ENCODE measurements at regions of chr6 and their contacts with region 1.

Region 1: GRCh38 chr6:169723200-169723909 is 945 bp downstream of the PHF10 start:
- DNase-seq: peak; percentile 47 to 85 (median 66)
- ATAC-seq: peak; percentile 30
- H3K4me3 ChIP-seq: peak overlapping the region; percentile 68 to 79
- H3K4me3 Mint-ChIP-seq: peak overlapping the region; percentile 85
- H3K27ac ChIP-seq: peak overlapping the region; percentile 72 to 84
- H3K27ac Mint-ChIP-seq: peak overlapping the region; percentile 96
- H3K4me1 ChIP-seq: peaks cover 22% of the 10 kb centered on the region
- H3K4me1 Mint-ChIP-seq: peaks cover 42% of the 10 kb centered on the region
- H3K27me3 ChIP-seq: no peaks in the 10 kb centered on the region
- H3K27me3 Mint-ChIP-seq: no peaks in the 10 kb centered on the region
- CTCF ChIP-seq: no peak

Region 2: GRCh38 chr6:168493976-168494375 is 1229.4 kb before region 1 on chr6:
- CTCF ChIA-PET with region 1: no interaction called
- POLR2A ChIA-PET with region 1: no interaction called
- intact Hi-C with region 1: no loop called
- DNase-seq: no peak
- ATAC-seq: no peak
- H3K4me3 ChIP-seq: no peak overlapping the region
- H3K4me3 Mint-ChIP-seq: no peak overlapping the region
- H3K27ac ChIP-seq: no peak overlapping the region
- H3K27ac Mint-ChIP-seq: no peak overlapping the region
- H3K4me1 ChIP-seq: no peaks in the 10 kb centered on the region
- H3K4me1 Mint-ChIP-seq: no peaks in the 10 kb centered on the region
- H3K27me3 ChIP-seq: no peaks in the 10 kb centered on the region
- H3K27me3 Mint-ChIP-seq: peaks cover 4% of the 10 kb centered on the region
- CTCF ChIP-seq: no peak

Region 3: DNA sequence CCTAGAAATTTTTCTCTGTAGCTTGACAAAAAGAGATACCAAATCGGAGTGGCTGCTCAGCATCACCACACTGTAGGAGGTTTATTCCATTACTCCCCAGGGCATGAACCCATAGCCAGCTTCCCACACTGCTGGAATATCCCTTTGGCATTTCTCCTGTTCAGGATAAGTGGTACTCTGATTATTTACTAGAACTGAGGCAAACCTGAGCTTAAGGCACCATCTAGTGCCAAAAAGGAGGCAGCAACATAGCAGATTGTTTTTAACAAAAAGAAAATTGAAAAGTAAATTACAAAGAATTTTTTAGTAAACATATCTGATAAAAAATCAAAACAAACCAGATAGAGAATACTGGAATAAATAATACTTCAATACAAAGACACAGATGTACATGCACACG is 203.3 kb before region 1 on chr6:
- CTCF ChIA-PET with region 1: no interaction called
- POLR2A ChIA-PET with region 1: no interaction called
- intact Hi-C with region 1: no loop called
- DNase-seq: no peak
- ATAC-seq: no peak
- H3K4me3 ChIP-seq: no peak overlapping the region
- H3K4me3 Mint-ChIP-seq: no peak overlapping the region
- H3K27ac ChIP-seq: no peak overlapping the region
- H3K27ac Mint-ChIP-seq: no peak overlapping the region
- H3K4me1 ChIP-seq: no peaks in the 10 kb centered on the region
- H3K4me1 Mint-ChIP-seq: no peaks in the 10 kb centered on the region
- H3K27me3 ChIP-seq: no peaks in the 10 kb centered on the region
- H3K27me3 Mint-ChIP-seq: no peaks in the 10 kb centered on the region
- CTCF ChIP-seq: no peak

Region 4: DNA sequence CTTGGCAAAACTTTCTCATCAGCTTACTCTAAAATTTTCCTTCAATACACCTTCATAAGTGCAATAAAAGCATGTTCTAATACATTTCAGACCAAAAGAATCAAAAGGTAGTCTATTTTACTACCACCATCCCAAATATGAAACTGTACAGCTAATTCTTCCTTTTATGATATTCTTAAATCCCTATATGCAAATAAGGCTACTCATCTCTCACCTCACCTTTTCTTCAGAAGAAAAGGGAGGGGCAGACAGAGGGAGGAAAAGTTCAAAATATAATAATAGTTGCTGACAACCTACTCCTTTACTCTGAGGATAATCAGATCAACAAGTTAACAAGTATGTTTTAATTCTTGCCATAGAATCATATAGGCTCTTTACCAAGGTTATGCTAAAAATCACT is 14.1 kb before region 1 on chr6:
- CTCF ChIA-PET with region 1: interaction called, 17 read pairs
- POLR2A ChIA-PET with region 1: interaction called, 122 read pairs
- intact Hi-C with region 1: no loop called
- DNase-seq: no peak
- ATAC-seq: no peak
- H3K4me3 ChIP-seq: no peak overlapping the region
- H3K4me3 Mint-ChIP-seq: no peak overlapping the region
- H3K27ac ChIP-seq: no peak overlapping the region
- H3K27ac Mint-ChIP-seq: no peak overlapping the region
- H3K4me1 ChIP-seq: peaks cover 16% of the 10 kb centered on the region
- H3K4me1 Mint-ChIP-seq: peaks cover 29% of the 10 kb centered on the region
- H3K27me3 ChIP-seq: no peaks in the 10 kb centered on the region
- H3K27me3 Mint-ChIP-seq: no peaks in the 10 kb centered on the region
- CTCF ChIP-seq: no peak

Region 5: DNA sequence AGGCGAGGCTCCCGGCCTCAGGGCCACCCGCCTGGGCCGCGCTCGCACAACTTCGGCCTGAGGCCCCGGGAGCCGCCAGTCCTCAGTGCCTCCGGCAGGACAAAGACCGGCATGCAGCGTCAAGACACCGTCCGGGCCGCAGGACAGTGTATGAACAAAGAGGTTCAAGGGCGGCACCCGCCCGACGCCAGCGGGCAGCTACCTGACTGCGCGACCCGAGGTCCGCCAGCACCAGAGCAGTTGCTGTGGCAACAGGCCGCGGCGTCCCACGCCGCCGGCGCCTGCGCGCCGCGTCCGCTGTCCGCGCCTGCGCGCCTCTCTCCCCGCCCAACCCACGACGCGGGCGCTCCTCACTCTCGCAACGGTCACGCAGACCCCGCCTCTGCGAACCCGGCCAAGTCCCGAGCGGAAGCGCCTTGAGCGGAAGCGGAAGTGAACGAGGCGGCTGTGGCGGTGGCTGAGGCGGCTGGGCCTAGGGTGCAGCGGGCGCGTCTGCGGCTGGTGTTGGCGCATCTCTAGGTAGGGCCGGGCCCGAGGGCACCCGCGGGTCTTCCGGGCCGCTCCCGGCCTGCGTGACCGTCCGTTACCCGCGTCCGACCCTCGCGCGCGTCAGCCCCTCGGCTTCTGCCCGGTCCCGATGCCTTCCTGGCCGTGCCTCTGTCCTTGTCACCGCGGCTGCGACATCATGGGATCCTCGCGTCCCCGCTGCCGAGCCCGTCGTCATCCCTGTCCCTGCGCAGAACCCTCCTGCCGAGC is 583.1 kb after region 1 on chr6 and contains the start of gene FAM120B:
- CTCF ChIA-PET with region 1: no interaction called
- POLR2A ChIA-PET with region 1: no interaction called
- intact Hi-C with region 1: no loop called
- DNase-seq: peak; percentile 92 to 98 (median 96)
- ATAC-seq: peak; percentile 93
- H3K4me3 ChIP-seq: peak within 1 kb of the TSS; percentile 76 to 92
- H3K4me3 Mint-ChIP-seq: peak within 1 kb of the TSS; percentile 96
- H3K27ac ChIP-seq: peak within 1 kb of the TSS; percentile 84 to 88
- H3K27ac Mint-ChIP-seq: peak within 1 kb of the TSS; percentile 97
- H3K4me1 ChIP-seq: peaks cover 40% of the 10 kb centered on the region
- H3K4me1 Mint-ChIP-seq: peaks cover 43% of the 10 kb centered on the region
- H3K27me3 ChIP-seq: no peaks in the 10 kb centered on the region
- H3K27me3 Mint-ChIP-seq: peaks cover 11% of the 10 kb centered on the region
- CTCF ChIP-seq: no peak
- total RNA-seq, gene FAM120B: 24.0 to 25.3 TPM

Region 6: GRCh38 chr6:170554013-170554795 is 830.8 kb after region 1 on chr6 and contains the start of gene TBP:
- CTCF ChIA-PET with region 1: no interaction called
- POLR2A ChIA-PET with region 1: interaction called, 12 read pairs
- intact Hi-C with region 1: no loop called
- DNase-seq: peak; percentile 93 to 99 (median 98)
- ATAC-seq: peak; percentile 91
- H3K4me3 ChIP-seq: peak within 1 kb of the TSS; percentile 61 to 93
- H3K4me3 Mint-ChIP-seq: no peak within 1 kb of the TSS
- H3K27ac ChIP-seq: peak within 1 kb of the TSS; percentile 89 to 96
- H3K27ac Mint-ChIP-seq: no peak within 1 kb of the TSS
- H3K4me1 ChIP-seq: peaks cover 39% of the 10 kb centered on the region
- H3K4me1 Mint-ChIP-seq: peaks cover 38% of the 10 kb centered on the region
- H3K27me3 ChIP-seq: no peaks in the 10 kb centered on the region
- H3K27me3 Mint-ChIP-seq: no peaks in the 10 kb centered on the region
- CTCF ChIP-seq: no peak
- total RNA-seq, gene TBP: 13.8 to 13.9 TPM